Caco-2 (cell line): ENCODE measurements at regions of chr1 and their contacts with region 1.

Region 1: DNA sequence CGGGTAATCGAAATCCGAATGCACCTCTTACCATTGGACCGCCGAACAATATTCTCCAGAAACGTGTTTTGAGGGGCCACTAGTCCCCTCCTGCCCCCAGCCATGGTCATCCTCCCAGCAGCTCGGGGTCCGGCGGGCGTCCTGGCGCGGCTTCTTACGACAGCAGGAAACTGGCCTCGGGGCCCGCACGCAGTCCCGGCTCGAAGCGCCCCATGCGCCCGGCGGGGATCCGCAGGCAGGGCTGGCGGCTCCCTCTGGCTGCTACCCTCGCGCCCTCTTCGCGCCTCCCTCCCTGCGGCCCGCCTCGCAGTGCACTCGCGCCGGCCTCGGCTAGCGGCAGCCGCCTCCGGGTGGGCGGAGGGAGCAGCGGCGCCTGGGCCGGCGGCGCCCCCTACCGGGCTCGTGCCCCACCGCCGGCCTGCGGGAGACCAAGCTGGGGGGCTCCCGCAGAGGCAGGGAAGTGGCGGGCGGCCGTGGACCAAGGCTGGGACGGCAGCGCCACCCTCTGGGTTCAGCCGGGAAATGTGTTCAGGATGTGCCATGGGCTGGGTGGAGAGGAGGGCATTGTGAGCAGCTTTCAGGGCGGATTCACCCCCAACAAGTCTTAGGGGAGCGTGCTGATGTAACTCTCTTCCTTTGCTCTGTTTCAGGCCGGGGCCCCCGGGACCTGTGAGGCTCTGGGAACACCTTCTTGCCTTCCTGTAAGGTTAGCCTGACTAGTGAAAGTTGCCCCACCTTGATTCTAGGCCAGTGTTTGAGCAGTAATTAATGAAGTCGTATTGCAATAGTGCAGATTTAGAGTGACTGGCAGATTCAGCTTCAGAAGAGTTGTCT is at the start of gene KCNH1:
- DNase-seq: peak; percentile 65 to 87
- H3K4me3 ChIP-seq: peak within 1 kb of the TSS; percentile 26
- H3K4me3 Mint-ChIP-seq: peak within 1 kb of the TSS; percentile 60
- H3K27ac Mint-ChIP-seq: no peak within 1 kb of the TSS
- H3K4me1 ChIP-seq: no peaks in the 10 kb centered on the region
- H3K4me1 Mint-ChIP-seq: no peaks in the 10 kb centered on the region
- H3K27me3 ChIP-seq: no peaks in the 10 kb centered on the region; the same call in 1 of the 2 replicates
- H3K27me3 Mint-ChIP-seq: peaks cover 23% of the 10 kb centered on the region
- CTCF ChIP-seq: peak; percentile 75 to 94
- total RNA-seq, gene KCNH1: 0.16 TPM in 1 of 2 replicates, not detected in the other

Region 2: DNA sequence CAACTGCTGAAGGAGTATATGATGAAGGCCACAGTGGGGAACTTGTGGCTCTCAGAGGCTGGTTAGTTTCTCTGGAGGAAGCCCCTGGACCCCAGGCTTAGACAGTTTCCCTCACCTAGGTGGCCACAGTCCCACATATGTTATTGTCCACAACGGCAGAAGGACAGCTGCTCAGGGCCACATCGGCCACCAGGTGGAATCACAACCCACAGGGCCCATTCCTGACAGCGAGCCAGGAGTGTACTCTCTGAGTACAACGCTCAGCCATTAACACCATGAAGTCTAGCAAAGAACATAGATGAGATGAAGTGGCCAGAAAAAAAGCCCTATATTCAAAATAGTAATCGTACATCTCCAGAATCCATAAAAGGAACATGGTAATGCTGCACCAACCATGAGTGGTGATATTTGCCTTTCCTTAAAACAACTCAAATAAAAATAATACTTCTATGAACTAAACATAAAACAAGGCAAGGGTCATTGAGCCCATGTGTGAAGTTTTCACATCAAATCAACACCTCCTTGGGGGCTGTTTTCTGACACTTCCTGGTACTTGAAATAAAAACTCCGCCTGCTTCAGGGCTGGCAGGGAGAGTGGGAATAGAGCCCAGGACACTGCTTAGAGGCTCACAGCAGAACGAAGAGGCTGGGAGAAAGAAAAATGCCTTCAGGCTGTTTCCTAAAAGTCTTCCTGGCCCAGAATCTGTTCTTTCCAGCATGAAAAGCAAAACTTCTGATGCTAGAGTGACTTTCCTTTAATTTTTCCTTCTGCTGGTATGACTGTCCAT is 422.0 kb before region 1 on chr1:
- CTCF ChIA-PET with region 1: no interaction called
- POLR2A ChIA-PET with region 1: no interaction called
- intact Hi-C with region 1: loop called (anchors 5 kb)
- DNase-seq: peak in 1 of 2 experiments; percentile 34
- H3K4me3 ChIP-seq: no peak overlapping the region
- H3K4me3 Mint-ChIP-seq: no peak overlapping the region
- H3K27ac Mint-ChIP-seq: no peak overlapping the region
- H3K4me1 ChIP-seq: no peaks in the 10 kb centered on the region
- H3K4me1 Mint-ChIP-seq: no peaks in the 10 kb centered on the region
- H3K27me3 ChIP-seq: no peaks in the 10 kb centered on the region
- H3K27me3 Mint-ChIP-seq: peaks cover 15% of the 10 kb centered on the region
- CTCF ChIP-seq: peak; percentile 17 to 47

Region 3: GRCh38 chr1:210951279-210951678 is 182.8 kb before region 1 on chr1:
- CTCF ChIA-PET with region 1: no interaction called
- POLR2A ChIA-PET with region 1: no interaction called
- intact Hi-C with region 1: loop called (anchors 10 kb)
- DNase-seq: no peak
- H3K4me3 ChIP-seq: no peak overlapping the region
- H3K4me3 Mint-ChIP-seq: no peak overlapping the region
- H3K27ac Mint-ChIP-seq: no peak overlapping the region
- H3K4me1 ChIP-seq: no peaks in the 10 kb centered on the region
- H3K4me1 Mint-ChIP-seq: no peaks in the 10 kb centered on the region
- H3K27me3 ChIP-seq: no peaks in the 10 kb centered on the region
- H3K27me3 Mint-ChIP-seq: peaks cover 17% of the 10 kb centered on the region
- CTCF ChIP-seq: no peak

Region 4: GRCh38 chr1:211158866-211159265 is 24.8 kb after region 1 on chr1:
- CTCF ChIA-PET with region 1: no interaction called
- POLR2A ChIA-PET with region 1: no interaction called
- intact Hi-C with region 1: no loop called
- DNase-seq: no peak
- H3K4me3 ChIP-seq: no peak overlapping the region
- H3K4me3 Mint-ChIP-seq: no peak overlapping the region
- H3K27ac Mint-ChIP-seq: no peak overlapping the region
- H3K4me1 ChIP-seq: no peaks in the 10 kb centered on the region
- H3K4me1 Mint-ChIP-seq: no peaks in the 10 kb centered on the region
- H3K27me3 ChIP-seq: no peaks in the 10 kb centered on the region; the same call in 1 of the 2 replicates
- H3K27me3 Mint-ChIP-seq: peaks cover 10% of the 10 kb centered on the region
- CTCF ChIP-seq: no peak

Region 5: DNA sequence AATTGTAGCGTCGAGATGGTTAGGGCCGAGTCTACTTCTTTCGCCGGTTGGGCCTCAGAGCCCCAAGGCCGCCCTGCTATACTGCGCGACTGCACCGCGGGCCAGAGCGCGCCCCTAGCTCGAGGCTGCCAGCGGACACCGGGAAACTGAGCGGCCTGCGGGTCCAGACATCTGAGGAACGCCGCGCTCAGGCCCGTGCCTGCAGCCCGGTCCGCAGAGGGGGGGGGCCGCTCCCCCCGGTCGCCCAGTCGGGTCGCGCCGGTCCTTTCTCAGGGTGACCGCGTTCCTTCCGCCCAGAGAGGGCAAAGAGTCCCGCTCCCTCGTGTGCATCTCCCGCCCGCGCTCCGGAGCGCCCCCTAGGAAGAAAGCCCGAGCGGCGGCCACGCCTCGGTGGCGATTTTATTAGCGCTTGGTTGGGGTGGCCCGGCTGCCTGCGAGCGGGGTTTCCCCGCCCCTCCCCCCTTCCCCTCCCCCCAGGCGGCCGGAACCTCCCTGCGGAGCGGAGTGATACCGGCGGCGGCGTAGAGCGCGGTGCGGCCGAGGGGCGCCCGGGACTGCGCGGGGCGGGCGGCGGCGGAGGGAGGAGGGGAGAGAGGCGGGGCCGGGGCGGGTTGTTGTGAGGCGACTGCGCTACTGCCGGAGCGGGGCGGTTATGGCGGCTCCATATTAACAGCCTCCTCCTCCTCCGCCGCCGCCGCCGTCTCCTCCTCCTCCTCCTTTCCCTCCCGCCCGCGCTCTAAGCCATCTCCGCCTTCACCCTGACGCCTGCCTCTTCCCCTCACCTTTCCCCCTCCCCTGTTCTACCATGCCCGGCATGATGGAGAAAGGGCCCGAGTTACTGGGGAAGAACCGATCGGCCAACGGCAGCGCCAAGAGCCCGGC is 124.9 kb after region 1 on chr1 and contains the start of gene RCOR3:
- CTCF ChIA-PET with region 1: no interaction called
- POLR2A ChIA-PET with region 1: interaction called, 3 read pairs
- intact Hi-C with region 1: loop called (anchors 1 kb)
- DNase-seq: peak; percentile 95
- H3K4me3 ChIP-seq: peak within 1 kb of the TSS; percentile 79
- H3K4me3 Mint-ChIP-seq: peak within 1 kb of the TSS; percentile 83
- H3K27ac Mint-ChIP-seq: peak within 1 kb of the TSS; percentile 89
- H3K4me1 ChIP-seq: peaks cover 8% of the 10 kb centered on the region
- H3K4me1 Mint-ChIP-seq: peaks cover 9% of the 10 kb centered on the region
- H3K27me3 ChIP-seq: no peaks in the 10 kb centered on the region
- H3K27me3 Mint-ChIP-seq: no peaks in the 10 kb centered on the region
- CTCF ChIP-seq: peak; percentile 70 to 75
- total RNA-seq, gene RCOR3: 42.3 TPM in 2 replicates